ENCODE measurements at regions of chr10 and their contacts with region 1.

Region 1: DNA sequence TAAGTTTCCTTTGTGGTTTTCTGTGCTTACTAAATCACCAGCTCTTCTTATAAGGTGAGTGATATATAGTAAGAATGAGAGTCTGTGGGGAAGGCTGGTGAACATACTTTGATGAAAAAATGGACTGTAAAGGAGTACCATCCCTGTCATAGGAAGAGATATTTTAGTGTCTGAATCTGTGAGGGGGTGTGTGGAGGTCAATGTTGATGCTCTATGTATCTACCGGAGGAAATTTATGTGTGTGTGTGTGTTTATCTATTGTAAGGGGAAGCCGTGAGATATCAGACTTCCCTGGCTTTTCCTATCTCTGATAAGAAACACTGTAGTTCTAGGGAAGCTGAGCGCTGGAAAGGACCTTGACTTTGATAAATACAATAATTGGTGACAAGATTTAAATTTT is 179.0 kb downstream of the PCDH15 start:
- DNase-seq: no peak
- ATAC-seq: no peak
- H3K4me3 ChIP-seq: no peak overlapping the region
- H3K27ac ChIP-seq: no peak overlapping the region
- H3K4me1 ChIP-seq: no peaks in the 10 kb centered on the region
- H3K27me3 ChIP-seq: no peaks in the 10 kb centered on the region
- CTCF ChIP-seq: no peak
- POLR2A ChIP-seq: no peak

Region 2: GRCh38 chr10:53978292-53978691 is 643.7 kb before region 1 on chr10:
- in situ Hi-C with region 1: no loop called
- intact Hi-C with region 1: no loop called
- DNase-seq: no peak
- ATAC-seq: no peak
- H3K4me3 ChIP-seq: no peak overlapping the region
- H3K27ac ChIP-seq: no peak overlapping the region
- H3K4me1 ChIP-seq: no peaks in the 10 kb centered on the region
- H3K27me3 ChIP-seq: no peaks in the 10 kb centered on the region
- CTCF ChIP-seq: no peak
- POLR2A ChIP-seq: no peak

Region 3: GRCh38 chr10:54530299-54530698 is 91.7 kb before region 1 on chr10:
- in situ Hi-C with region 1: loop called in 1 of 4 experiments (anchors 25 kb)
- intact Hi-C with region 1: no loop called
- DNase-seq: no peak
- ATAC-seq: no peak
- H3K4me3 ChIP-seq: no peak overlapping the region
- H3K27ac ChIP-seq: no peak overlapping the region
- H3K4me1 ChIP-seq: no peaks in the 10 kb centered on the region
- H3K27me3 ChIP-seq: no peaks in the 10 kb centered on the region
- CTCF ChIP-seq: no peak
- POLR2A ChIP-seq: no peak

Region 4: DNA sequence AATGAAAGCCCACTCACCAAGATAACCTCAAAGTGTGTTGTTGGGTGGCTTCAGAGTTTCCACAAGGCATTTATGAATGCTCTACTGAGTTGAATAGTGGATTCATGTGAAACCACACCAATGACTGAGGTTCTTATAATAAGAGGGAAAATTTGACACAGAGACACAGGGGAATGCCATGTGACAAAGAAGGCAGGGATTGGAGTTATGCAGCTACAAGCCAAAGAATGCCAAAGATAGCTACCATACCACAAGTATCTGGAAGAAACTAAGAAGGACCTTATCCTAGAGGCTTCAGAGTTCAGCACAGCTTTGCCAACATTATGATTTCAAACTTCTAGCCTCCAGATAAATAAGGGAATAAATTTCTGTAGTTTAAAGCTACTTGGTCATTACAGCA is 247.0 kb after region 1 on chr10:
- in situ Hi-C with region 1: no loop called
- intact Hi-C with region 1: no loop called
- DNase-seq: no peak
- ATAC-seq: no peak
- H3K4me3 ChIP-seq: no peak overlapping the region
- H3K27ac ChIP-seq: no peak overlapping the region
- H3K4me1 ChIP-seq: no peaks in the 10 kb centered on the region
- H3K27me3 ChIP-seq: no peaks in the 10 kb centered on the region
- CTCF ChIP-seq: no peak
- POLR2A ChIP-seq: no peak